CD8-positive, alpha-beta T cell (primary cell): ENCODE measurements at regions of chr19 and their contacts with region 1.

Region 1: GRCh38 chr19:19488875-19489690 is 26.3 kb downstream of the TSSK6 start:
- DNase-seq: peak; percentile 76 to 98 (median 91)
- ATAC-seq: peak; percentile 85
- H3K4me3 ChIP-seq: peak overlapping the region in 1 of 2 experiments; percentile 0
- H3K4me3 Mint-ChIP-seq: peak overlapping the region; percentile 64
- H3K27ac ChIP-seq: peak overlapping the region; percentile 76 to 97
- H3K27ac Mint-ChIP-seq: peak overlapping the region; percentile 96
- H3K4me1 ChIP-seq: peaks cover 57% of the 10 kb centered on the region
- H3K4me1 Mint-ChIP-seq: peaks cover 55% of the 10 kb centered on the region
- H3K27me3 ChIP-seq: no peaks in the 10 kb centered on the region
- H3K27me3 Mint-ChIP-seq: no peaks in the 10 kb centered on the region
- CTCF ChIP-seq: no peak

Region 2: DNA sequence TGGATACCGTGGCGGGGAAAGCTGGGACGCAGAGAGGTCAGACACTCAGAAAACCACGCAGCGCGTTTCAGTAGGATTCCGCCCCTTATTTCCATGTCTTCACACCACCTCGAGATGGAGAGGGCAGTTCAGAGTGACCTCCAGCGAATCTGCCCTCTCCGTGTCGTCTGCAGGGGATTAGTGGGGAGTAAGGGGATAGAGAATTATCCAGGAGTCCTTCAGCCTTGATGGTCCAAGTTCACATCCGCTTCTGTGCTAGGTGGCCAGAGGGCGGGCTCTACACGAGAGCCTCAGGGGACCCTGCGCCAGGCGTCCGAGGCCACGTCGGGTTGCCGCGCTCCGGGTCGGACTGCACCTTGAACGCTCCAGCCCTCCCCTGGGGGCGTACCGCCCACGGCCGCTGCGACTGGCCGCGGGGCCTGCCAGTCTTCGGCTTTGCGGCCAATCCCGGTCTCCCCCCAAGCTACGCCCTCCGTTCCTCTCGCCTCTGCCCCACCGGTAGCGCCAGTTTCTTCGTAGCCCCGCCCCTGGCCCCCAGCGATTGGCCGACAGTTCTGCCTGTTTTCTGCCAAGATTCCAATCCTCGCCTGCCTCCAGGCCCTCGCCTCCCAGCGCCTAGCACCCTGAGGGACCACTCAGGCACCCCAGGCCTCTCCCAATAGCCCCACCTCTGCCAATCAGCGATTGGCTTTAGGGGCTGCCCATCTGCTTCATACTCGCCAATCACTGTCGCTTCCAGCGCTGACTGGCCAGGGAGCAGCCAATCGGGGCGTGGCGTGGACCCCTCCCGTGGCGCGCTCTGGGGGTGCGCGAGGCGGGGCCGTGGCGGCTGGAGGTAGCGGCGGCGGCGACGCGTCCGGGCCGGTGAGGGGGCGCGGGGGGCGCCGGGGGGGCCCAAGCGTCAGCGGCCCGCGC is 425.6 kb before region 1 on chr19 and contains the start of gene SLC25A42:
- CTCF ChIA-PET with region 1: no interaction called
- POLR2A ChIA-PET with region 1: no interaction called
- intact Hi-C with region 1: loop called in 1 of 2 experiments (anchors 10 kb)
- DNase-seq: peak; percentile 97 to 100 (median 99)
- ATAC-seq: peak; percentile 90
- H3K4me3 ChIP-seq: peak within 1 kb of the TSS; percentile 61 to 87
- H3K4me3 Mint-ChIP-seq: peak within 1 kb of the TSS; percentile 89
- H3K27ac ChIP-seq: peak within 1 kb of the TSS; percentile 47 to 77
- H3K27ac Mint-ChIP-seq: peak within 1 kb of the TSS; percentile 88
- H3K4me1 ChIP-seq: peaks cover 23% of the 10 kb centered on the region
- H3K4me1 Mint-ChIP-seq: peaks cover 32% of the 10 kb centered on the region
- H3K27me3 ChIP-seq: no peaks in the 10 kb centered on the region
- H3K27me3 Mint-ChIP-seq: no peaks in the 10 kb centered on the region
- CTCF ChIP-seq: no peak
- total RNA-seq, gene SLC25A42: 8.3 to 10.6 TPM

Region 3: DNA sequence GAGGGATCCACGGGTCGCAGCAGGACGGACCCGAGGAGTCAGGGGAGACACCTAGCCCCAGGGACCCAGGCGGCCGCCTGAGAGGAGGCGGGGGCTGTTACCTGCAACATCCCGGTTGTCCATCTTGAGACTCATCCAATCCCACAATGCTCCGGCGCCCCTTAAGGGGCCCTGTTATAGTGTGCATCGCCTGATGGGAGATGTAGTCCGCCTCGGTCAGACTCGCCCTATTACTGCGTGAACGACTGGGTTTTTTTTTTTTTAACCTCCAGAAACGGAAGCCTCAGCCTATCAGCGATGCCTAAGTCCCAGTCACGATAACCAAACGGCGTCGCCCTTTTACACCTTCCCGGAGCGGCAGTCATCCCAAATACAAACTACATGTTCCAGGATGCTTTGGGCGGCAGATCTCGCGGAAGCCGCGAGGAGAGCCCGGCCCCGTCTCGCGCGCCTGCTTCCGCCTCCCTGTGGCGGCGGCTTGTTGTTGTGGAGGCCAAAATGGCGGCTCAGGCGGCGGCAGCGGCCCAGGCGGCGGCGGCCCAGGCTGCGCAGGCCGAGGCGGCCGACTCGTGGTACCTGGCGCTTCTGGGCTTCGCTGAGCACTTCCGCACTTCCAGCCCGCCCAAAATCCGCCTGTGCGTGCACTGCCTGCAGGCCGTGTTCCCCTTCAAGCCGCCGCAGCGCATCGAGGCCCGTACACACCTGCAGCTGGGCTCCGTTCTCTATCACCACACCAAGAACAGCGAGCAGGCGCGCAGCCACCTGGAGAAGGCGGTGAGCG is 168.5 kb before region 1 on chr19 and contains the starts of genes MAU2 and SUGP1:
- CTCF ChIA-PET with region 1: interaction called, 3 read pairs
- POLR2A ChIA-PET with region 1: no interaction called
- intact Hi-C with region 1: loop called (anchors 1 kb)
- DNase-seq: peak; percentile 81 to 95 (median 88)
- ATAC-seq: peak; percentile 90
- H3K4me3 ChIP-seq: peak within 1 kb of the TSS; percentile 88 to 94
- H3K4me3 Mint-ChIP-seq: peak within 1 kb of the TSS; percentile 99
- H3K27ac ChIP-seq: peak within 1 kb of the TSS; percentile 88 to 97
- H3K27ac Mint-ChIP-seq: peak within 1 kb of the TSS; percentile 99
- H3K4me1 ChIP-seq: peaks cover 35% of the 10 kb centered on the region
- H3K4me1 Mint-ChIP-seq: peaks cover 40% of the 10 kb centered on the region
- H3K27me3 ChIP-seq: no peaks in the 10 kb centered on the region
- H3K27me3 Mint-ChIP-seq: no peaks in the 10 kb centered on the region
- CTCF ChIP-seq: no peak
- total RNA-seq, gene MAU2: 137 to 139 TPM
- total RNA-seq, gene SUGP1: 60.9 to 68.2 TPM

Region 4: GRCh38 chr19:19366612-19367396 is 122.3 kb before region 1 on chr19:
- CTCF ChIA-PET with region 1: interaction called, 202 read pairs
- POLR2A ChIA-PET with region 1: interaction called, 33 read pairs
- intact Hi-C with region 1: loop called (anchors 1 kb)
- DNase-seq: peak; percentile 35 to 85 (median 66)
- ATAC-seq: peak; percentile 57
- H3K4me3 ChIP-seq: no peak overlapping the region
- H3K4me3 Mint-ChIP-seq: peak overlapping the region; percentile 53
- H3K27ac ChIP-seq: no peak overlapping the region
- H3K27ac Mint-ChIP-seq: no peak overlapping the region
- H3K4me1 ChIP-seq: peaks cover 23% of the 10 kb centered on the region
- H3K4me1 Mint-ChIP-seq: peaks cover 16% of the 10 kb centered on the region
- H3K27me3 ChIP-seq: no peaks in the 10 kb centered on the region
- H3K27me3 Mint-ChIP-seq: no peaks in the 10 kb centered on the region
- CTCF ChIP-seq: peak; percentile 81

Region 5: GRCh38 chr19:19399733-19400433 is 89.2 kb before region 1 on chr19:
- CTCF ChIA-PET with region 1: interaction called, 17 read pairs
- POLR2A ChIA-PET with region 1: interaction called, 23 read pairs
- intact Hi-C with region 1: loop called (anchors 1 kb)
- DNase-seq: no peak
- ATAC-seq: no peak
- H3K4me3 ChIP-seq: no peak overlapping the region
- H3K4me3 Mint-ChIP-seq: no peak overlapping the region
- H3K27ac ChIP-seq: no peak overlapping the region
- H3K27ac Mint-ChIP-seq: peak overlapping the region; percentile 21
- H3K4me1 ChIP-seq: peaks cover 13% of the 10 kb centered on the region
- H3K4me1 Mint-ChIP-seq: peaks cover 45% of the 10 kb centered on the region
- H3K27me3 ChIP-seq: no peaks in the 10 kb centered on the region
- H3K27me3 Mint-ChIP-seq: no peaks in the 10 kb centered on the region
- CTCF ChIP-seq: no peak

Region 6: DNA sequence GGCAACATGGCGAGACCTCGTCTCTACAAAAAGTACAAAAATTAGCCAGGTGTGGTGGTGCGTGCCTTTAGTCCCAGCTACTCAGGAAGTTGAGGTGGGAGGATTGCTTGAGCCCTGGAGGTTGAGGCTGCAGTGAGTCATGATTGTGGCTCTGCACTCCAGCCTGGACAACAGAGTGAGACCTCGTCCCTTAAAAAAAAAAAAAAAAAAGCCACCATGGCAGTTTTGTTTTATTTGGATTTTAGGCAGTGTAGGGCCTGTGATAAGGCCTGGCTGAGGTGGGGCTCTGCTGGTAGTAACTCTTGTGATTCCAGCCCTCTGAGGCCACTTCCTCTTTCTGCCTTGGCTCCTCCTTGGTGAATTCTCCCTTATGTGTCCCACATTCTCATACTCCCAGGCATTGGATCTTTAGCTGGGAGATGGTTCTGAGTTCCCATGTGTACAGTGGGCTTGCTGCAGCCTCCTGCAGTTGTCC is 44.4 kb before region 1 on chr19:
- CTCF ChIA-PET with region 1: interaction called, 11 read pairs
- POLR2A ChIA-PET with region 1: interaction called, 4 read pairs
- intact Hi-C with region 1: loop called in 1 of 2 experiments (anchors 5 kb)
- DNase-seq: peak in 3 of 9 experiments; percentile 37 to 58 (median 40)
- ATAC-seq: no peak
- H3K4me3 ChIP-seq: no peak overlapping the region
- H3K4me3 Mint-ChIP-seq: peak overlapping the region; percentile 50
- H3K27ac ChIP-seq: peak overlapping the region in 1 of 2 experiments; percentile 76
- H3K27ac Mint-ChIP-seq: peak overlapping the region; percentile 91
- H3K4me1 ChIP-seq: peaks cover 58% of the 10 kb centered on the region
- H3K4me1 Mint-ChIP-seq: peaks cover 80% of the 10 kb centered on the region
- H3K27me3 ChIP-seq: no peaks in the 10 kb centered on the region
- H3K27me3 Mint-ChIP-seq: no peaks in the 10 kb centered on the region
- CTCF ChIP-seq: no peak

Region 7: DNA sequence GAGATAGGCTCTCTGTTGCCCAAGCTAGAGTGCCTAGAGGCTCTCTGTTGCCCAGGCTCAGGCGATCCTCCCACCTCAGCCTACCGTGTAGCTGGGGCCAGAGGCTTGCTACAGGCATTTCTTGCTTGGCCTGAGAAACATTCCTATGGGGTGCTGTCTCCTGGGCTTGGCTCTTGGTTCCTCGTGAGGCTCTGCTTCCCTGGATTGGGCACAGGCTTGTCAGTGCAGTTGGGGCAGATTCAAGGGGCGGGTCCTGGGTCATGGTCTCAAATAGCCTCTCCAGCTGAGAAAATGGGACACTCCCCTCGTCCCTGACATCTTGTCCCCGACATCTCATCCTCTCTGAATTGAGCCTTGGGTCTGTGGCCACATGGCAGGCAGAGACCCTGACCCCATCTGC is 21.3 kb after region 1 on chr19:
- CTCF ChIA-PET with region 1: interaction called, 11 read pairs
- POLR2A ChIA-PET with region 1: interaction called, 5 read pairs
- intact Hi-C with region 1: no loop called
- DNase-seq: no peak
- ATAC-seq: no peak
- H3K4me3 ChIP-seq: no peak overlapping the region
- H3K4me3 Mint-ChIP-seq: no peak overlapping the region
- H3K27ac ChIP-seq: no peak overlapping the region
- H3K27ac Mint-ChIP-seq: peak overlapping the region; percentile 52
- H3K4me1 ChIP-seq: peaks cover 5% of the 10 kb centered on the region
- H3K4me1 Mint-ChIP-seq: no peaks in the 10 kb centered on the region
- H3K27me3 ChIP-seq: no peaks in the 10 kb centered on the region
- H3K27me3 Mint-ChIP-seq: no peaks in the 10 kb centered on the region
- CTCF ChIP-seq: no peak

Region 8: GRCh38 chr19:19745496-19746285 is 256.6 kb after region 1 on chr19:
- CTCF ChIA-PET with region 1: no interaction called
- POLR2A ChIA-PET with region 1: no interaction called
- intact Hi-C with region 1: no loop called
- DNase-seq: peak in 2 of 9 experiments; percentile 21 to 29
- ATAC-seq: peak; percentile 52
- H3K4me3 ChIP-seq: no peak overlapping the region
- H3K4me3 Mint-ChIP-seq: no peak overlapping the region
- H3K27ac ChIP-seq: no peak overlapping the region
- H3K27ac Mint-ChIP-seq: no peak overlapping the region
- H3K4me1 ChIP-seq: no peaks in the 10 kb centered on the region
- H3K4me1 Mint-ChIP-seq: no peaks in the 10 kb centered on the region
- H3K27me3 ChIP-seq: no peaks in the 10 kb centered on the region
- H3K27me3 Mint-ChIP-seq: no peaks in the 10 kb centered on the region
- CTCF ChIP-seq: no peak